ENCODE measurements at regions of chr4 and their contacts with region 1.

Region 1: DNA sequence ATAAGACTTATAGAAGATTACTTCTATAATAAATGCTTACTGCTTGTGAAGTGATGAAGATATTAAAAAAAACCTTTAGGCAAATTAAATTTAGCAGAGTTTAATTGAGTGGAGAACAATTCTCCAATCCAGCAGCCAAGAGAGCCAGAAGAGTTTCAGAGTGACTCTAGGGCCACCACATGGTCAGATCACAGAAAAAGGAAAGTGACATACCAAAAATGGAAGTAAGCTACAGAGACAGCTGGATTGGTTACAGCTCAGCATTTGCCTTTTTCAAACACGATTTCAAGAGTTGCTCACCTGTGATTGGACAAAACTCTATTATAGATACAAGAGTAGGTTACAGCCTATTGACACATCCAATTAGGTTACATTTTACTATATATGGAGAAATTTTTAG is 79.0 kb upstream of the TRAM1L1 start:
- DNase-seq: no peak
- ATAC-seq: no peak
- H3K4me3 ChIP-seq: no peak overlapping the region
- H3K27ac ChIP-seq: no peak overlapping the region
- H3K4me1 ChIP-seq: no peaks in the 10 kb centered on the region
- H3K27me3 ChIP-seq: no peaks in the 10 kb centered on the region
- CTCF ChIP-seq: no peak
- POLR2A ChIP-seq: no peak

Region 2: DNA sequence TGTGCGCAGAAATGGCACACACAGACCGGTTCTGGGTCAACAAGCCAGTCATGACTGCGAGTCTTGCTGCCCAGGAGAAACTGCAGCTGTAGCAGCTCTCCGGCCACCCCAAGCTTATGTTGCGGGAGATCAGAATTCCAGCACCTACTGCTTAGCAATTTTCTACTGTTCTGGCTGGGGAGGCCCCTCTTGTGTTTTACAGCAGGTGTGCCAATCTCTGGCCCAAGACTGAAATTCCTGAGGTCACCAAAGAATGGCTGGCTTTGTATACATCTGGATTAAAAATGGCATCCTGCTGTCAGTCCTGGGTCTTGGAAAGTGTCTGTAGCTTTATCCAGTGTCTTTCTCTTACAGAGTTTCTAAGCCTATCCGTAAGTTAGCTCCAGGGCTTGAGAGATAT is 10.1 kb before region 1 on chr4:
- intact Hi-C with region 1: loop called in 1 of 10 experiments (anchors 1 kb)
- DNase-seq: no peak
- ATAC-seq: no peak
- H3K4me3 ChIP-seq: no peak overlapping the region
- H3K27ac ChIP-seq: no peak overlapping the region
- H3K4me1 ChIP-seq: no peaks in the 10 kb centered on the region
- H3K27me3 ChIP-seq: no peaks in the 10 kb centered on the region
- CTCF ChIP-seq: no peak
- POLR2A ChIP-seq: no peak

Measured in heart left ventricle (tissue), 16 donors.